ENCODE measurements at regions of chr10 and their contacts with region 1.

Region 1: GRCh38 chr10:69486922-69487666 is 35.8 kb downstream of the TSPAN15 start:
- DNase-seq: peak; percentile 81

Region 2: GRCh38 chr10:69451209-69451783 is 35.8 kb before region 1 on chr10 and contains the start of gene TSPAN15:
- intact Hi-C with region 1: loop called in 1 of 2 experiments (anchors 5 kb)
- DNase-seq: peak; percentile 95
- total RNA-seq, gene TSPAN15: 44.6 to 45.6 TPM

Measured in posterior vena cava (tissue), 2 donors.